ENCODE measurements at regions of chr6 and their contacts with region 1.

Region 1: DNA sequence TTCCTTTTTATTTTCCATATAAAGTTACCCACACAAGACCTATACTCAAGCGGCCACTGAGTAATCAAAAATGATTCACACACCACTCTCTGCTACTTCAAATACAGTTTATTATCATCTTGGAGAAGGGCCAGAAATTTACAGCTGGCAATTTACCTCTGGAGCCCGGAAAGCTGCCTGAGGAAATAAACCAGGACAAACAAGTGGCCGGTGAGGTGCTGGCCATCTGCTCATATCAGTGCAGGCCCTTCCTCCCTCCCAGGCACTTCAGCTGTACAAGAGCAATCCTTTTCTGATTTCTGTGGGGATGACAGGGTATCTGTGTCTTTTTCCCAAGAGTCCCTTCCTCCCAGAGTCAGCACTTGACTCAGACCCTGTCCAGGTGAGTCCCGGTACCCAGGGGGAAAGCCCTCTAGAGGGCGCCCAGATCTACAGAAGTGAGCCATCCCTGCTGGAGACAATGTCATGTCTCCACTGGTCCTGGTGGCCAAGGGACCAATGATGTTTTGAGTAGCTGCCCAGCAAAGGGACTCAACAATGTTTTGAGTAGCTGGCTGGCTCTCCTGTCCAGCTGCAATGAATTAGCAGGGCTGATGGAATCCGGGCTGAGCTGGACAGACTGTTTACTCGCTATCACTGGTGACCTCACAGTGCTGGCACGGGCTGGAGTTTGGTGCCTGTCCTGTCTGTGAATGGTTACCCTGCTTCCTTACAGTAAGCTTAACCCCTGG is 23.6 kb downstream of the LRP11 start:
- DNase-seq: no peak
- H3K4me3 ChIP-seq: no peak overlapping the region
- H3K27me3 ChIP-seq: no peaks in the 10 kb centered on the region
- CTCF ChIP-seq: peak; percentile 59

Region 2: GRCh38 chr6:149750136-149750609 is 90.3 kb before region 1 on chr6:
- CTCF ChIA-PET with region 1: no interaction called
- POLR2A ChIA-PET with region 1: no interaction called
- DNase-seq: no peak
- H3K4me3 ChIP-seq: peak overlapping the region; percentile 96
- H3K27me3 ChIP-seq: no peaks in the 10 kb centered on the region
- CTCF ChIP-seq: no peak

Region 3: GRCh38 chr6:149863697-149864577 is 23.4 kb after region 1 on chr6 and contains the start of gene LRP11:
- CTCF ChIA-PET with region 1: interaction called, 27 read pairs
- POLR2A ChIA-PET with region 1: no interaction called
- DNase-seq: no peak
- H3K4me3 ChIP-seq: peak within 1 kb of the TSS; percentile 65
- H3K27me3 ChIP-seq: no peaks in the 10 kb centered on the region
- CTCF ChIP-seq: no peak
- polyA plus RNA-seq, gene LRP11: 26.3 and 32.6 TPM in 2 replicates

Region 4: GRCh38 chr6:149918151-149918905 is 77.8 kb after region 1 on chr6:
- CTCF ChIA-PET with region 1: interaction called, 10 read pairs
- POLR2A ChIA-PET with region 1: no interaction called
- DNase-seq: no peak
- H3K4me3 ChIP-seq: no peak overlapping the region
- H3K27me3 ChIP-seq: peaks cover 8% of the 10 kb centered on the region
- CTCF ChIP-seq: no peak

Region 5: GRCh38 chr6:149925974-149926777 is 85.7 kb after region 1 on chr6:
- CTCF ChIA-PET with region 1: interaction called, 27 read pairs
- POLR2A ChIA-PET with region 1: no interaction called
- DNase-seq: no peak
- H3K4me3 ChIP-seq: peak overlapping the region; percentile 34
- H3K27me3 ChIP-seq: peaks cover 15% of the 10 kb centered on the region
- CTCF ChIP-seq: peak; percentile 94